Right ventricle myocardium superior (tissue), 1 donor: ENCODE measurements at regions of chr6 and their contacts with region 1.

Region 1: GRCh38 chr6:116971959-116972358 is 94.9 kb downstream of the RFX6 start:
- DNase-seq: no peak
- ATAC-seq: no peak

Region 2: GRCh38 chr6:115706330-115706729 is 1265.6 kb before region 1 on chr6:
- intact Hi-C with region 1: no loop called
- DNase-seq: no peak
- ATAC-seq: no peak

Region 3: DNA sequence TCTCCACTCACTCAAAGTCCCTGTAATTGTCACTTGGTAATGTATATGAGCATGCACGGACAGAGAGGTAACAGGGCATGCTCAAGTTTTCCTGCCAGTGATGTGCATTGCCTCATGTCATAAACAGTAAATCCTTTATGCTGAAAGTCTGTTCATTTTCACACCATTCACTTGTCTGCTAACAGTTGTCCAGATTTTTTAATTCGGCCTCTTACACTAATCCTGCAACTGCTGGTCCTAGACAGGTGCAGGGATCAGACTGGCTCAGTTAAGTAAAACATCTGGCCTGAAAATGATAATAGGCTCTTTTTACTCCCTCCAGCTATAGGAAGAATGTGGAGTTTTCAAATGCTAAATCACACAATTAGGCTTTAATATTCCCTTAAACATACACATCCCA is 108.0 kb after region 1 on chr6:
- intact Hi-C with region 1: no loop called
- DNase-seq: no peak
- ATAC-seq: no peak

Region 4: DNA sequence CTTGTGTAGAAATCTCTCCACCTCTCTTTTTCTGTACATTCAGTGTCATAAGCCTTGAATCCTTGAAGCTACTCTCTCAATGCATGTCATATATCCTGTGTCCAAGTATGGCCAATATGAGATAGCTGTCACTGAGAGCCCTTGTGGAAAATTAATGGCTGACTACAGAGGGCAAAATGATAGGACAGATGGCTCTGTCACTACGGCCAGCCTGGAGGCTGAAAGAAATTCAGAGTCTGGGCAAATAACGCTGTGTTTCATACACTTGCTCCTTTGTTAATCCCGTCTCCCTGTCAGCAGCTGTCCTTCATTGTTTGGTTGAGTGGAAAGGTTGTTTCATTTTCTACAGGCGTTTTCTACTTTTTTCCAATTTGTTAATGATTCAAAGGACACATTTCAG is 223.0 kb after region 1 on chr6:
- intact Hi-C with region 1: loop called (anchors 10 kb)
- DNase-seq: no peak
- ATAC-seq: no peak

Region 5: DNA sequence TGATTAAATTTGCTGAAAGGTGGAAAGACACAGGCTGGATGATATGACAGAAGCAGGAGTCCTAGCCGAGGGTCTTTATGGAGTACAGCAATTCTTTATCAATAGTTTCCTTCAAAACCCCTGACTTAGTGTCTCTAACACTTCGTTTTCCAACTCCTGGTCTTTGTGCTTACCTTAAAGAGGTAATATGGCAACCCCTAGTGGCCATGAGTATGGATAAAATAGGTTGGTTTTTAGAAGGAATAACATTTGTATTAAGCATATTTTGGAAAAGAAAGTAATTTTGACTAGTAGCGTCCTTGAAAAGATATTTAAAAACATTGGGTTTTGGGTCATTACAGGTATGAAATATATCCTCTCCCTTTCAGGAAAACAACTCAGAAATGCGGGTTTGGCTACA is 345.3 kb after region 1 on chr6:
- intact Hi-C with region 1: loop called (anchors 5 kb)
- DNase-seq: no peak
- ATAC-seq: no peak